ENCODE measurements at regions of chr3 and their contacts with region 1.

Region 1: GRCh38 chr3:69385723-69386555 is at the start of gene FRMD4B:
- DNase-seq: no peak
- ATAC-seq: no peak
- H3K4me3 Mint-ChIP-seq: peak within 1 kb of the TSS; percentile 48
- H3K27ac Mint-ChIP-seq: no peak within 1 kb of the TSS
- H3K4me1 Mint-ChIP-seq: peaks cover 9% of the 10 kb centered on the region
- H3K27me3 Mint-ChIP-seq: peaks cover 26% of the 10 kb centered on the region
- CTCF ChIP-seq: no peak
- total RNA-seq, gene FRMD4B: not detected in 2 replicates

Region 2: GRCh38 chr3:68972358-68972979 is 413.5 kb before region 1 on chr3:
- CTCF ChIA-PET with region 1: no interaction called
- POLR2A ChIA-PET with region 1: no interaction called
- intact Hi-C with region 1: loop called (anchors 5 kb)
- DNase-seq: no peak
- ATAC-seq: no peak
- H3K4me3 Mint-ChIP-seq: no peak overlapping the region
- H3K27ac Mint-ChIP-seq: no peak overlapping the region
- H3K4me1 Mint-ChIP-seq: no peaks in the 10 kb centered on the region
- H3K27me3 Mint-ChIP-seq: peaks cover 6% of the 10 kb centered on the region
- CTCF ChIP-seq: no peak

Region 3: DNA sequence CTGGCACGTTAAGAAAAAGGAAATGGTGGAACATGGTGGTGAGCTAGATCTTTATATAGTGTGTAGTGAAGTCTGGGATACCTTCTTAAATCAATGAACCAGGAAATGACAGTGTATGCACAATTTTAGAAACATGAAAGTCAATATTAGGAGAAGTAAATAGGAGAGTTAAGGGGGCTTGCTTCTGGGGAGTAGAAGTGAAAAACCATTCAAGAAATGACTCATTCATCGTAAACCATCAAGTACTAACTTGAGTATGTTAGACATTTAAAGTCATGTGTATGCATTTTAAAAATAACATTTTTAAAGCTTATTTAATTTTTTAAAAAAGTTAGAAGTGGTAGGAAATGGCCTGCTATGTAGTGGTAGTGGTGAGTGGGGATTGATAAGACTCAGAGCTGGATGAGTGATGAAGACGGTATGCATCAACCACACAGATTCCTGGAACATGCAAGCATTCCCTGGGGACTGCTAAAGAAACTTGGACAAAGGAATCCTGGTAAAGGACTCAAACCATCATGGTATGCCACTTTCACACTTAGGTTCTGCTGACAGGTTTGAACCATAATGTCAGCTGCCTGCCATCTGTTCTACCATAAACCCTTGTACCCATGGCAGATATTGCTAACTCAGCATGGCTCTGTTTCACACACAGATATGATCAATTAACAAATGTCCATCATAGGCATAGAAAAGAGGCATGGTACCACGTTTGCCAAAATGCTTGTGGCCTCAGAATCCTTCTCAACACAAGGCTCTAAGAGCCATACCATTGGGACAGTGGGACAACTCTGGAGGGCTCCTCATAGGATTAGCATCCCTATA is 324.4 kb after region 1 on chr3:
- CTCF ChIA-PET with region 1: no interaction called
- POLR2A ChIA-PET with region 1: no interaction called
- intact Hi-C with region 1: no loop called
- DNase-seq: no peak
- ATAC-seq: no peak
- H3K4me3 Mint-ChIP-seq: no peak overlapping the region
- H3K27ac Mint-ChIP-seq: no peak overlapping the region
- H3K4me1 Mint-ChIP-seq: no peaks in the 10 kb centered on the region
- H3K27me3 Mint-ChIP-seq: peaks cover 2% of the 10 kb centered on the region
- CTCF ChIP-seq: no peak